ENCODE measurements at regions of chr5 and their contacts with region 1.

Region 1: DNA sequence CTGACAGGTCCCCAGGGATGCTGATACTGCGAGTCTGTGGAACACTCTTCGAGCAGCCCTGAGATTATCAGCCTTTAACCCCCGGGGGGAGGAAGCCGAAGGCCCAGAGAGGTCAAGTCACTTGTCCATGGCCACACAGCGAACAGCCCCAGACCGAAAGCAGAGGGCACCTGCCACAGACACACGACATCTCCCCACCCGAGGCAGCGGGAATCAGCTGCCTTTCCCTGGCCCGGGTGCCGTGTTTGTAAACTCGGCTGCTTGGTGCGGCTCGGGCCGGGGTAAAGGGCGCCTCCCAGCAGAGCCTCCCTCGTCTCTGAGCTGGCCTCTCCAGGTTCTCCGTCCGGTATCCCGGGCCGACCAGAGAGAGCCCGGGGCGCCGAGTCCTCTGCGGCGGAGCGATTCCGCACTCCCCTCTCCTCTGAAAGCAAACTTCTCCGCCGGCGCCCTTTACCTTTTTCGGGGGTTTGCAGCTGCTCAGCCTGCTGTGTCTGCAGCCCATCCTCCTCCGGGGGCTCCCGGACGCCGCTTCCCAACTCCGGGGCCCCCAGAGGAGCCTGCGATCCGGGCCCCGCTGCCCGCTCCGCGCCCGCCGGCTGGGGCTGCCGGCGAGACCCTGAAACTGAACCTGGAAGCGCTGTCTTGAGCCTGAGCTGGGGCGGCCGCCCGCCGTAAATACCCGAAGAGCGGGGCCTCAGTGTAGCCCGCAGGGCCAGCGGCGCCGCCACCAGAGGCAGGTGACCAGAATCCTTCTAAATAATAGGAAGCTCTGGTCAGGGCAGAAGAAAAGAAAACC is at the start of gene CCDC69:
- DNase-seq: peak; percentile 27 to 64 (median 47)
- ATAC-seq: peak; percentile 69
- H3K4me3 ChIP-seq: peak within 1 kb of the TSS; percentile 95
- H3K4me3 Mint-ChIP-seq: peak within 1 kb of the TSS; percentile 80 to 97 (median 92)
- H3K27ac ChIP-seq: peak within 1 kb of the TSS; percentile 93
- H3K27ac Mint-ChIP-seq: peak within 1 kb of the TSS; percentile 87 to 98 (median 98)
- H3K4me1 ChIP-seq: peaks cover 51 to 56% of the 10 kb centered on the region in 2 donors
- H3K4me1 Mint-ChIP-seq: peaks cover 48 to 67% (median 60%) of the 10 kb centered on the region in 7 donors
- H3K27me3 ChIP-seq: no peaks in the 10 kb centered on the region
- H3K27me3 Mint-ChIP-seq: no peaks in the 10 kb centered on the region
- total RNA-seq, gene CCDC69: 63.6 to 104 (median 94.1) TPM

Region 2: GRCh38 chr5:151141535-151141934 is 82.1 kb before region 1 on chr5:
- CTCF ChIA-PET with region 1: interaction called, 3 read pairs
- POLR2A ChIA-PET with region 1: interaction called, 16 read pairs
- intact Hi-C with region 1: no loop called
- DNase-seq: peak in 7 of 9 donors; percentile 39 to 62 (median 53)
- ATAC-seq: peak; percentile 80
- H3K4me3 ChIP-seq: peak overlapping the region; percentile 44
- H3K4me3 Mint-ChIP-seq: peak overlapping the region; percentile 68 to 96 (median 88)
- H3K27ac ChIP-seq: peak overlapping the region; percentile 67
- H3K27ac Mint-ChIP-seq: peak overlapping the region; percentile 81 to 99 (median 92)
- H3K4me1 ChIP-seq: peaks cover 85 to 88% of the 10 kb centered on the region in 2 donors
- H3K4me1 Mint-ChIP-seq: peaks cover 84 to 100% (median 96%) of the 10 kb centered on the region in 7 donors
- H3K27me3 ChIP-seq: no peaks in the 10 kb centered on the region
- H3K27me3 Mint-ChIP-seq: no peaks in the 10 kb centered on the region

Region 3: DNA sequence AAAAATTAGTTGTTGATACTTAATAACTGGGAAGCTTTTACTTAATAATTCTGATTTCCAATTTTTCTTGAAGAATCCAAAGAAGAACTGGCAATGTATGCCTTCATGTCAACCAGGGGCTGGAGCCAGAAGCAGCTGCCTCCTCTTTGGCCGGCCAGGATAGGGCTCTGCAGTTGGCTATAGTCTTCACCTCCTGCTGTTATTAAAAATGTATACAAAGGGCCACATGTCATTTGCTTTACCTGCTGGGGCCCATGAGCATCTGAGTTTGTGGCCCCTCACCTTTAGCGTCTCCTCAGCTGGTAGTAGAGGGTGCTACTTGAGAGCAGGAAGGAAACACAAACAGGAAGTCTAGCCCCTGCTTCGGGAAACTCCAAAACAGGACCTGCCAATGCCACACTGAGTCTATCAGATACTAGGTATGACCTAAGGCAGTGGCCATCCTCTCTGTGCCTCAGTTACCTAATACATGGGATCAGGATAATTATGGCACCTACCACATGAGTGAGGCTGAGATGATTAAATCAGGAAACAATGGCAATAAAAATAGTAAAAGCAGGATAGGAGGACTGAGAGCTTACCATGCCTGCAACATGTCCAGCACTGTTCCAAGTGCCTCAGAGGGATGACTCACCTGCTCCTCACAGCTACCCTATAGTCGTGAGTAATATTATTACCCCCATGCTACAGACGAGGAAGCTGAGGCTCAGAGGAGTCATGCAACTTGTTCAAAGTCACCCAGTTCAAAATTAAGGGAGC is 21.1 kb before region 1 on chr5:
- CTCF ChIA-PET with region 1: no interaction called
- POLR2A ChIA-PET with region 1: interaction called, 44 read pairs
- intact Hi-C with region 1: no loop called
- DNase-seq: no peak
- ATAC-seq: peak; percentile 83
- H3K4me3 ChIP-seq: peak overlapping the region; percentile 12
- H3K4me3 Mint-ChIP-seq: peak overlapping the region in 9 of 10 donors; percentile 1 to 73 (median 55)
- H3K27ac ChIP-seq: peak overlapping the region; percentile 60
- H3K27ac Mint-ChIP-seq: peak overlapping the region; percentile 79 to 96 (median 87)
- H3K4me1 ChIP-seq: peaks cover 14 to 20% of the 10 kb centered on the region in 2 donors
- H3K4me1 Mint-ChIP-seq: peaks cover 22 to 60% (median 57%) of the 10 kb centered on the region in 7 donors
- H3K27me3 ChIP-seq: no peaks in the 10 kb centered on the region
- H3K27me3 Mint-ChIP-seq: no peaks in the 10 kb centered on the region

Region 4: GRCh38 chr5:151239237-151239861 is 15.7 kb after region 1 on chr5:
- CTCF ChIA-PET with region 1: interaction called, 8 read pairs
- POLR2A ChIA-PET with region 1: interaction called, 27 read pairs
- intact Hi-C with region 1: loop called (anchors 1 kb)
- DNase-seq: peak in 5 of 9 donors; percentile 44 to 60 (median 49)
- ATAC-seq: peak; percentile 77
- H3K4me3 ChIP-seq: no peak overlapping the region
- H3K4me3 Mint-ChIP-seq: peak overlapping the region in 1 of 10 donors; percentile 60
- H3K27ac ChIP-seq: no peak overlapping the region
- H3K27ac Mint-ChIP-seq: peak overlapping the region in 2 of 9 donors; percentile 68 to 78
- H3K4me1 ChIP-seq: peaks cover 5 to 15% of the 10 kb centered on the region in 2 donors
- H3K4me1 Mint-ChIP-seq: peaks cover 8 to 42% (median 21%) of the 10 kb centered on the region in 7 donors
- H3K27me3 ChIP-seq: no peaks in the 10 kb centered on the region
- H3K27me3 Mint-ChIP-seq: no peaks in the 10 kb centered on the region

Region 5: DNA sequence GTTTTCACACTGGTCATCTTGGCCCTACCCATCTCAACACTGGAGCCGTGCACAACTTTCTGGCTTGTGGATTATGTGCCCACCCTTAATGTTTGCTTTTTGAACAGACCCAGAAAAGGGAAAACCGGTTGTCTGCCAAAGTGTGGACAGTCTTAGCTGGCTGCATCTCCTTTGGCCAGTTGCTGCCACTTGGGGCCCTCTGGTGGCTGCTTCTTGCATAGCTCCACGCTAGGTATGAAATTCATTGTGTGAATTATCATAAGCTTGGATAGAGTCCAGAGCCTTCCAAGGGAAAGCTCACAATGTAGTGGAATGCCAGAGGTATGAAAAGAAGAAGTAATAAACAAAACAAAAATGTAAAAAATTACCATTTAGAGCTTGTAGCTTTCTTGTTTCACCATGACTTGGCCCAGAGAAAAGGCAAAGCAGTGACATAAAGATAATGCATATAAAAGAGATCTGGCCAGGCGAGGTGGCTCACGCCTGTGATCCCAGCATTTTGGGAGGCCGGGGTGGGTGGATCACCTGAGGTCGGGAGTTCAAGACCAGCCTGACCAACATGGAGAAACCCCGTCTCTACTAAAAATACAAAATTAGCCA is 92.4 kb after region 1 on chr5:
- CTCF ChIA-PET with region 1: no interaction called
- POLR2A ChIA-PET with region 1: no interaction called
- intact Hi-C with region 1: loop called in 1 of 2 experiments (anchors 1 kb)
- DNase-seq: peak in 6 of 9 donors; percentile 6 to 55 (median 11)
- ATAC-seq: peak; percentile 75
- H3K4me3 ChIP-seq: no peak overlapping the region
- H3K4me3 Mint-ChIP-seq: no peak overlapping the region
- H3K27ac ChIP-seq: no peak overlapping the region
- H3K27ac Mint-ChIP-seq: no peak overlapping the region
- H3K4me1 ChIP-seq: no peaks in the 10 kb centered on the region
- H3K4me1 Mint-ChIP-seq: no peaks in the 10 kb centered on the region
- H3K27me3 ChIP-seq: no peaks in the 10 kb centered on the region
- H3K27me3 Mint-ChIP-seq: peaks cover 0 to 14% (median 6%) of the 10 kb centered on the region in 5 donors